ENCODE measurements at regions of chr7 and their contacts with region 1.

Region 1: DNA sequence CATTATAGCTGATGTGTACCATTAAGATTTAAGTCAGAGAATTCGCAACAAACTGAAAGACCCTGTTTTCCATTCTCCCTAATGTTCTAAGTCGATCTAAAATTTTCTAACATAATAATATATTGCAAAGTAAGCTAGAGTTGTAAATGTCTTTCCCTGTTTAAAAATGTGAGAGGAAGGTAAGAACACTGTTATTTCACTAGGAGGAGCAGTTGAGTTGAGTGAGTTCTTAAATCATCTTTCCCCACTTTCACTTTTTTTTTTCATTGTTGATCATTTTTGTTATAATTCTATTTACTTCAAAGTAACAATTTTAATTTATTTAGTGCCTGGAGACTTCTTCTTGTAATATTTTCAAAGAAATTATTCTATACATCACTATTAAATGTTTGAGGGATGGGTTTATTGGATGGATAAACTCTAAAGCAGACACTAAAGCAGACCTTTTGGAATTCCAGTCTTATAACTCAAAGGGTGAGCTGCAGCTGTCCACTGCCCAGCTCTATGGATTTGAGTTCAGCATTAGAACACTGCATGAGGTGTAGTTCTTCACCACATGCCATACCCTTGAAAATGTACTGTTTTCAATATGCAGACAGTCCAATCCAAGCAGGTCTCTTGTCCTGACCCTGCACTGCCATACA is 181.3 kb upstream of the FZD1 start:
- H3K4me3 ChIP-seq: no peak overlapping the region
- H3K27ac ChIP-seq: no peak overlapping the region
- H3K4me1 ChIP-seq: no peaks in the 10 kb centered on the region
- CTCF ChIP-seq: no peak

Region 2: DNA sequence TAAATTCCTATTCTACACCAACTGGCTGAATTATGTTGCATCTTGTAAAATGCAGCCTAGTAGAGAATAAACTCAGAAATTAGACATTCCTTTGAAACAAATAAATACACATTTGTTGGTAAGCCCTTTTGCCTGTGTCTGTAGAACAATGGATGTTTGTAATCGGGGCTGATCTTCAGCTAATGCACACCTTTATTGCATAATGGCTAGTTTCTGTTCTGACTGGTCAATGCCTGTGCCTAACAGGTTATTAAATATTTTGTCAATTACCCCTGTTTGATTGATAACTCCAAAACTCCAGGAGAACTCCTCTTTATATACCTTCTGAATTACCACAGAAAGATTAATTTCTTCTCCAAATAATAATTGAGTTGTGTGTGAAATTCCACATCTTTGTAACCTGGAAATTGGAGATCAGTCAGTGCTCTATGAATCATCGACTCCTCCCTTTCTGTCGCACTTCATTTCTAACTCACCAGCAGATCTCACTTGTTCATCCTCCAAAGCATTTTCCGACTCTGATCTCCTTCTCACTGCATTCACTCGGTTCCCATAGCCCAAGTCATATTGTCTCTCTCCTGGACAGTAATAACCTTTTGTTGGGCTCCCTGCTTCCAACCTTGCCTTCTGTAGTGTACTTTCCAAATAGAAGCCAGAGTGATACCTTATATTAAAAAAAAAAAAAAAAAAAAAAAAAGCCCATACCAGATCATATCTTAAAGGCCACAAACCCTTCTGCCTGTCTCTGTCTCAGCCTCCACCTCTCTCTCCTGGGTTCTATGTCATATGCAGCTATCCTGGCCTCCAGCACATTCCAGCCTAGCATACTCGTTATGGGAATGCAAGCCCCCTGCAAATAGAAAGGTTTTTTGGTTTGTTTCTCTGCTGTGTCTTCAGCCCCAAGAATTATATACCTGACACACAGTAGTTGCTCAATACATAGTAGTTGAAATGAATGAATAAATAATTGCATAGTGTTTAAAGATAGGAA is 14.5 kb before region 1 on chr7:
- CTCF ChIA-PET with region 1: no interaction called
- POLR2A ChIA-PET with region 1: no interaction called
- H3K4me3 ChIP-seq: no peak overlapping the region
- H3K27ac ChIP-seq: no peak overlapping the region
- H3K4me1 ChIP-seq: no peaks in the 10 kb centered on the region
- CTCF ChIP-seq: no peak

Region 3: GRCh38 chr7:91784463-91784862 is 701.5 kb after region 1 on chr7:
- CTCF ChIA-PET with region 1: interaction called, 13 read pairs
- POLR2A ChIA-PET with region 1: no interaction called
- H3K4me3 ChIP-seq: no peak overlapping the region
- H3K27ac ChIP-seq: no peak overlapping the region
- H3K4me1 ChIP-seq: no peaks in the 10 kb centered on the region
- CTCF ChIP-seq: no peak

Measured in HEK293 (cell line).